Stomach (tissue), 19 donors: ENCODE measurements at regions of chr6 and their contacts with region 1.

Region 1: GRCh38 chr6:43143235-43144124 is 27.6 kb upstream of the SRF start:
- DNase-seq: peak; percentile 90 to 97
- H3K4me3 ChIP-seq: peak overlapping the region in 1 of 4 donors; percentile 4
- H3K27ac ChIP-seq: peak overlapping the region in 4 of 5 donors; percentile 31 to 45 (median 42)
- H3K4me1 ChIP-seq: peaks cover 10 to 15% (median 12%) of the 10 kb centered on the region in 4 donors
- H3K27me3 ChIP-seq: no peaks in the 10 kb centered on the region
- CTCF ChIP-seq: peak in 5 of 7 experiments; percentile 91 to 96 (median 94)
- EP300 ChIP-seq: no peak
- POLR2A ChIP-seq: no peak

Region 2: DNA sequence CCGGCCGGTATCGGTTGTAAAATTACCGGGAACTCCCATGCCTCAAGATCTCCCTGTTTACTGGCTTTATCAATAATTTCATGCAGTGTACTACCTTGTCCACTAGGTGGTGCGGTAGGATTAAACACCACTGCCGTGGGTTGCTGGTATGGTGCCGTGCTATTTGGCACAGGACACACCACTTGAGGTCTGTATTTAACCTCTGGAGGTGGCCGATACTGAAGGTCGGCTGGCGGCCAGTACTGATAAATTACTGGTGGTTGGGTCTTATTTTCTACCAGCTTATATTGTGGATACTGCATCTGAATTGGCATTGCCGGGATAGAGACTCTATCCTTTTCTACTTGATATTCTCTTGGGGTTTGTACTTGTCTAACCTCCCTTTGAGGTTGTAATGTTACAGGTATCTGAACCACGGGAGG is 241.9 kb before region 1 on chr6:
- intact Hi-C with region 1: loop called (anchors 5 kb)
- DNase-seq: peak; percentile 88 to 94
- H3K4me3 ChIP-seq: peak overlapping the region in 1 of 4 donors; percentile 39
- H3K27ac ChIP-seq: peak overlapping the region in 1 of 5 donors; percentile 8
- H3K4me1 ChIP-seq: peaks cover 0 to 35% (median 21%) of the 10 kb centered on the region in 4 donors
- H3K27me3 ChIP-seq: no peaks in the 10 kb centered on the region
- CTCF ChIP-seq: peak in 6 of 7 experiments; percentile 50 to 97 (median 92)
- EP300 ChIP-seq: no peak
- POLR2A ChIP-seq: no peak

Region 3: GRCh38 chr6:43070028-43070632 is 73.3 kb before region 1 on chr6:
- intact Hi-C with region 1: loop called (anchors 10 kb)
- DNase-seq: peak in 1 of 2 donors; percentile 83
- H3K4me3 ChIP-seq: no peak overlapping the region
- H3K27ac ChIP-seq: no peak overlapping the region
- H3K4me1 ChIP-seq: peaks cover 0 to under 1% (median 0%) of the 10 kb centered on the region in 4 donors
- H3K27me3 ChIP-seq: peaks cover 0 to under 1% (median 0%) of the 10 kb centered on the region in 3 donors
- CTCF ChIP-seq: peak in 3 of 7 experiments; percentile 25 to 38 (median 31)
- EP300 ChIP-seq: no peak
- POLR2A ChIP-seq: no peak